ENCODE measurements at regions of chr6 and their contacts with region 1.

Region 1: DNA sequence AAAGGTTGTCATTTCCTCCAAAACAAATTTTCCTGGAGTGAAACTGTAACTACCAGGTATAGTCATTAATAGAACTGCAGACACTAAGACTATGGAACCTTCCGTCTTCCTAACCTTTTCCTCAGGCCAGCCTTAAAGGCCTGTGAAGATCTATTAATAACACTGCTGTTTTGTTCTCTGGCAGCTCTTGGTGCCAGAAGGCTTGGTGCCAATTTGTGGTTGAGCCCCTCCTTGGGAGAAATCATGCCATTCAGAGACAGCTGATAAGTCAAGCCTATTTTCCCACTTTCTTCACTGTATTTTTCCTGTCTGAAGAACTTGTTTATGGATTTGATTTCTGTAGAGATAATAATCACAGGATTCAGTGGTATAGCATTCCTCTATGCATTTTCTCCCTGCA is 64.8 kb downstream of the HCRTR2 start:
- DNase-seq: no peak
- H3K4me3 ChIP-seq: no peak overlapping the region
- H3K27ac ChIP-seq: no peak overlapping the region
- H3K4me1 ChIP-seq: no peaks in the 10 kb centered on the region
- H3K27me3 ChIP-seq: no peaks in the 10 kb centered on the region
- CTCF ChIP-seq: no peak
- POLR2A ChIP-seq: no peak

Region 2: GRCh38 chr6:53615633-53616449 is 1623.3 kb before region 1 on chr6:
- intact Hi-C with region 1: no loop called
- DNase-seq: no peak
- H3K4me3 ChIP-seq: no peak overlapping the region
- H3K27ac ChIP-seq: no peak overlapping the region
- H3K4me1 ChIP-seq: no peaks in the 10 kb centered on the region
- H3K27me3 ChIP-seq: no peaks in the 10 kb centered on the region
- CTCF ChIP-seq: no peak
- POLR2A ChIP-seq: no peak

Region 3: DNA sequence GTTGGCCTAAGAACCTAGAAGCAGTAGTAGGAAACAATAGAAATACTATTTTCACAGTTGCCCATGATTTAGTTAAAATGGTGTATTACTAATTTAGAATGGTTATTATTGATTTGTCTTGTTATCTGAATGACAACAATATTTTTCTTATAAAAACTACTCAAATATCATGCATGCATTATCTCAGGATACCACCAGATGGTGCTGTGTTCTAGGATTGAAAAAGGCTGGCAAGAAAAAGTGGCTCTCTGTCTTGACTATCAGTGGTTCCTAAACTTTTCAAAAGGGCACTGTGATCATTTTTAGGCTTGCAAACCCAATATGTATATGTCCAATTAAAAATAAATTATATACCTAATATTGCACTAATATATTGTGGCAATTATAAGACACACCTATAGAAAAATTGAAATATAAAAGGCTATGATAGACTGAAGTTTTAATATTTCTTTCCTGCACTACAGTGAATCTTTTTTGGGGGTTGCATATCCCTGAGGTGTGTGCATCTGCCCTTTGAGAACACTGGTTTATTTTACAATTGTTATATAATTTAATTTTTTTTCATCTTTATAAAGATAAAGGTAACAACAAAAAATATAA is 1259.5 kb before region 1 on chr6:
- intact Hi-C with region 1: loop called (anchors 5 kb)
- DNase-seq: no peak
- H3K4me3 ChIP-seq: no peak overlapping the region
- H3K27ac ChIP-seq: no peak overlapping the region
- H3K4me1 ChIP-seq: no peaks in the 10 kb centered on the region
- H3K27me3 ChIP-seq: no peaks in the 10 kb centered on the region
- CTCF ChIP-seq: peak; percentile 66 to 73 (median 71)
- POLR2A ChIP-seq: no peak